RWPE1 (cell line): ENCODE measurements at regions of chr6 and their contacts with region 1.

Region 1: DNA sequence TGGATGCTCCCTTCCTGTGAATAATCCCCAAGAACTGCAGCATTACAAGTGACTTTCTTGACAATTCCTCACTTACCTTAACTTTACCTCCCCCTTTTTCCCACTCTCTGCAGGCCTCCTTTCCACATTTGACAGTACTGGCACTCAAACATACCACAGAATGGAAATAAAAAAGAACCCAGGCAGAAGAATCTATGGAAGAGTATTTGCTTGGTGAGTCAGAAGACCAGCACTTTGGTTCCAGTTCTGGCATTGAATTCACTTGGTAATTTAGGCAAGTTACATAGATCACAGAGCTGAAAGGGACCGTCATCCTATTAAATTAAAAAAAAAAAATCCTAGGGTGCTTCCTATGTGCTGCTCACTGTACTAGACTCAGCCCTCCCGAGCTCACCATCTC is 55.0 kb downstream of the BTBD9 start:
- DNase-seq: no peak
- H3K27ac ChIP-seq: no peak overlapping the region
- CTCF ChIP-seq: no peak

Region 2: DNA sequence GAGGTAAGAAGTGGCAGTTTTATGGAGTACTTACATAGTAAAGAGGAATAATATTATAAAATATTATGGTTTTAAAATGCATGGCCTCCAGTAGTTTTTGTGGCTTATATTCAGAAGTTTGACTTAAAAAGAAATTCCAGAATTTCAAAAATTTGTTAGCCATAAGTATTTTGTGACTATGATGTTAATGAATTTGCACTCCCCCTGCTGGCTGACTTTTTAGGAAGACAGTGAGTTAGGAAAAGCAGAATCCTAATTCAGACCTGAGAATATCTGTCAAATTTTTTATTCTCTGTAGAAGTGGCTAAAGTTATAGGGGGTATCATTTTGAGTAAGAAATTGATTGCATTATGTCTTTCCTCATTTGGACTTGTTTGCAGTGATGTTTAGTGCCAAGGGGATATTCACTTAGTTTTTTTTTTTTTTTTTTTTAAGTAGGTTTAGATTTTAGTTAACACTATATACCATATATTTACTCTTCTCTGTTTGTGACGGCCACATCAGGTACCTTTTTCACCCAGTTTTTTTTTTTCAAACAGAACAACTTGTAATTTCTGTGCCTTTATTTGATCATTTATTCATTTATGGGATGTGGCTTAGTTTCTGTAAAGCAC is 724.4 kb before region 1 on chr6:
- CTCF ChIA-PET with region 1: interaction called, 10 read pairs
- POLR2A ChIA-PET with region 1: no interaction called
- DNase-seq: peak; percentile 24
- H3K27ac ChIP-seq: no peak overlapping the region
- CTCF ChIP-seq: peak; percentile 70

Region 3: DNA sequence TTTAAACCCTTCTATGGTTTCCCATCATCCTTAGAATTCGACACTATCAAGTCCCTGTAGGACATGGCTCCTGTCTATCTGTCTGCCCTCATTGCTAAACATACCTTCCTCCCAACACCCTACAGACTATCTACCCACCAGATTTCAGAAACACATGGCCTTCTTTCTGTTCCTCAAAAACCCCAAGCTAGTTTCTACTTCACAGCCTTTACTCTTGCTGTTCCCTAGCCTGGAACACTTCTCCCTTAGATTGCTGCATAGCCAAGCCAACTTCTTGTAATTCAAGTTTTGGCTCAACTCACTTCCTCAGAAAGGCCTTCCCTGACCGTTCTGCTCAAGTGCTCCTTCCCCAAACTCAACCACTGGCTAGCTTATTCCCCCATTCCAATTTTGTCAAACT is 101.2 kb before region 1 on chr6:
- CTCF ChIA-PET with region 1: no interaction called
- POLR2A ChIA-PET with region 1: no interaction called
- DNase-seq: no peak
- H3K27ac ChIP-seq: no peak overlapping the region
- CTCF ChIP-seq: no peak

Region 4: DNA sequence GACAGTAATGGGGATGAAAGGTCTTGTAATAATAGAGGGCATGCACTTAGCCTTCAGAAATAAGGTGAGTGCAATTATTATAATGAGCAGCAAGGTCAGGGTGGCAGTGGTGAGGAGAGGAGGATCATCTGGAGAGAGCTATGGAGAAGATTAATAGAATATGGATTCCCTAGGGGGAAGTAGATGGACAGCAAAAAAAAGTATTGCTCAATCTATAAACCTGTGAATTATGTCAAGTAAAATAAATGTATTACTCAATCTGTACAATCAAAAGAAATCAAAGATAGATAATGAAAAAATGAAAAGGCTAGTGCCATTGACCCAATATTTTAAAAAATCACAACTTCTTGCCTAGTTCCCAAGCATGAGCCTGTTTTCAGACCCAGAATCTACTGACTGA is 75.6 kb after region 1 on chr6:
- CTCF ChIA-PET with region 1: no interaction called
- POLR2A ChIA-PET with region 1: no interaction called
- DNase-seq: no peak
- H3K27ac ChIP-seq: no peak overlapping the region
- CTCF ChIP-seq: no peak